ENCODE measurements at regions of chr10 and their contacts with region 1.

Region 1: GRCh38 chr10:93080350-93081046 is 6.8 kb downstream of the CYP26A1 start:
- DNase-seq: peak; percentile 48 to 75 (median 67)
- ATAC-seq: peak; percentile 71 to 74 (median 72)
- H3K4me3 ChIP-seq: no peak overlapping the region
- H3K27ac ChIP-seq: peak overlapping the region in 1 of 3 donors; percentile 41
- H3K4me1 ChIP-seq: peaks cover 0 to 47% (median 14%) of the 10 kb centered on the region in 4 donors
- H3K27me3 ChIP-seq: no peaks in the 10 kb centered on the region
- CTCF ChIP-seq: peak; percentile 80 to 88 (median 81)
- POLR2A ChIP-seq: no peak

Region 2: GRCh38 chr10:93030409-93030808 is 50.1 kb before region 1 on chr10:
- intact Hi-C with region 1: no loop called
- DNase-seq: no peak
- ATAC-seq: no peak
- H3K4me3 ChIP-seq: no peak overlapping the region
- H3K27ac ChIP-seq: no peak overlapping the region
- H3K4me1 ChIP-seq: peaks cover 0 to 26% (median 8%) of the 10 kb centered on the region in 4 donors
- H3K27me3 ChIP-seq: no peaks in the 10 kb centered on the region
- CTCF ChIP-seq: no peak
- POLR2A ChIP-seq: no peak

Region 3: DNA sequence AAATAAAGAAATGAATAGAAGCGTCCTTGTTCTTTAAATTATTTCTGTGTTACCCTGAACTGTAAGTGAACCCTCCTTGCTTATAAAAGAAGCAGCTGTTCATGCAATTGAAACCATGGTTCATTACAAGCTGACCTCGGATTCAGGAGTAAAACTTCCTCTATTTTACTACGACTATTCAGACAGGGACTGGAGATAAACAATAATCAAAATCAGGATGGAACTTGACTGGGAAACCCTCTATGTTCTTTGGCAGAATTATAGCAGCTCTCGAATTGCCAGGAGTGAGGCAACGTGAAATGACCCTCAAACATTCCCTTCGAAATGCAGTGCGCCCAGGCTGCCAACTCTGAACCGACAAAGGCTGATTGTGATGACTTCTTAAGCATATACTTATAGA is 165.3 kb after region 1 on chr10:
- intact Hi-C with region 1: no loop called
- DNase-seq: peak in 1 of 3 donors; percentile 61
- ATAC-seq: peak; percentile 66 to 81 (median 78)
- H3K4me3 ChIP-seq: no peak overlapping the region
- H3K27ac ChIP-seq: no peak overlapping the region
- H3K4me1 ChIP-seq: peaks cover 0 to 16% (median 3%) of the 10 kb centered on the region in 4 donors
- H3K27me3 ChIP-seq: no peaks in the 10 kb centered on the region
- CTCF ChIP-seq: no peak
- POLR2A ChIP-seq: no peak

Region 4: DNA sequence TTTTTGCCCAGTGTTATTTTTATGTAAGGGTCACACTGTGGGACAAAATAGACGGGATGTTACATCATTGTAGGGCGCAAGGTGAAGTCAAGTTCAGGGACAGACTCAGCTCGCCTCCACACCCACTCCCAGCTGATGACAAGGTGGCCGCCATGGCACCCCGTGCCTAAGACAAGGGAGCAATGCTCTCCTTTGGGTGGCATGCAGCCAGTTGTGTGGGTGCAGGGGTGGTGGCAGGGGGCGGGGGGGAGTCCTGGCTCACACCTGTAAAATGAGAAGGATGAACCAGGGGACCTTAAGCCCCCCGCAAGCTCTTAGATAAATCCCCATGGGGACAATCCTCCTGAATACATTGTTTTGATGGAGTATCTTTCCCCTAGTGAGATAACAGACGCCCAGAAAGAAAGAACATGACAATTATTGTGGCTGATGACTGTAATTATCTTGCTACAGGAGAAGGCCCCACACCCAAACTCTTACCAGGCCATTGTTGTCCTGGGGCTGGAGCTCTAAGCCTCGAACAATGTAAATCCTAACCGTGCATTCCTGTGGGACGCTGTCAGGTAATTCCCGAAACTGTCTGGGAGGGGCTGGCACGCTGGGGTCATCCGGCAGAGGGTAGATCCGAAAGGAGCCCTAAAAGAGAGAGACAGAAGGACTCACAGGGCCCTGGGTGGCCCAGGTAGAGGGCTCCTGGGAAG is 252.9 kb after region 1 on chr10:
- intact Hi-C with region 1: no loop called
- DNase-seq: no peak
- ATAC-seq: no peak
- H3K4me3 ChIP-seq: no peak overlapping the region
- H3K27ac ChIP-seq: no peak overlapping the region
- H3K4me1 ChIP-seq: no peaks in the 10 kb centered on the region
- H3K27me3 ChIP-seq: no peaks in the 10 kb centered on the region
- CTCF ChIP-seq: no peak
- POLR2A ChIP-seq: no peak

Region 5: GRCh38 chr10:93346694-93347093 is 266.2 kb after region 1 on chr10:
- intact Hi-C with region 1: loop called in 1 of 2 experiments (anchors 10 kb)
- DNase-seq: no peak
- ATAC-seq: peak in 3 of 4 donors; percentile 26 to 48 (median 45)
- H3K4me3 ChIP-seq: no peak overlapping the region
- H3K27ac ChIP-seq: no peak overlapping the region
- H3K4me1 ChIP-seq: no peaks in the 10 kb centered on the region
- H3K27me3 ChIP-seq: no peaks in the 10 kb centered on the region
- CTCF ChIP-seq: no peak
- POLR2A ChIP-seq: no peak